Activated T-helper 1 cell treated with anti-CD3 and anti-CD28 coated beads, Interleukin-12 subunit alpha, Interleukin-12 subunit beta, Interleukin-2, Interleukin-4 antibody, amounts not matched to agents 30 ng/mL and 10 ng/mL and 1 ng/mL, durations not matched to agents 14 hours and 24 hours and 36 hours (primary cell): ENCODE measurements at regions of chr13 and their contacts with region 1.

Region 1: GRCh38 chr13:102394158-102395053 is 7.4 kb downstream of the FGF14 start:
- DNase-seq: peak; percentile 93
- H3K4me3 Mint-ChIP-seq: peak overlapping the region; percentile 87
- H3K27ac Mint-ChIP-seq: peak overlapping the region; percentile 92
- H3K4me1 Mint-ChIP-seq: peaks cover 30% of the 10 kb centered on the region
- H3K27me3 Mint-ChIP-seq: peaks cover 25% of the 10 kb centered on the region

Region 2: GRCh38 chr13:100674848-100675660 is 1719.4 kb before region 1 on chr13:
- intact Hi-C with region 1: loop called (anchors 10 kb)
- DNase-seq: peak; percentile 100
- H3K4me3 Mint-ChIP-seq: peak overlapping the region; percentile 87
- H3K27ac Mint-ChIP-seq: peak overlapping the region; percentile 86
- H3K4me1 Mint-ChIP-seq: peaks cover 31% of the 10 kb centered on the region
- H3K27me3 Mint-ChIP-seq: peaks cover 10% of the 10 kb centered on the region

Region 3: DNA sequence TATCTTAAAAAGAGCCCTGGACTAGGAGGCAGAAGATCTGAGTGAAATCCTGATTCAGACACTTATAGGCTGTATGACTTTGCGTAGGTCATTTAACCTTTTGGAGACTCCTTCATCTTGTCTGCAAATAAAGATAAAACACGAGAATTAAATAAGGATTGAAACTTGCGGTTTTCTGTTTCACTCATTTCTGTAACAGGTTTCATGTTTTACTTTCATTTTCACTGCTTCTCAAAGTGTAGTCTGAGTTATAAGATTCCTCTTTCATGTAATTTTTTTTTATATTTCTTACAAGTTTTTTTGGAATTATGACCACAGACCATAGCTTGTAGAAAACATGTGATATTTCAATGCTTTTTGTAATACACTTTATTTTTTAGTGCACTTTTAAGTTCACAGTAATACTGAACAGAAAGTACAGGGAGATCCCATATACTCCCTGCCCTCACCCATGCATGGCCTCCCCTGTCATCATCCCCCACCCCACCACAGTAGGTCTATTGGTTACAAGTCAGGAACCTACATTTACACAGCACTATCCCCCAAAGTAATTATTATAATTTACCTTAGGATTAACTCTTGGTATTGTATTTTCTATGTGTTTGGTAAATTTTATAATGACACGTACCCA is 767.4 kb before region 1 on chr13:
- intact Hi-C with region 1: loop called (anchors 2 kb)
- DNase-seq: no peak
- H3K4me3 Mint-ChIP-seq: no peak overlapping the region
- H3K27ac Mint-ChIP-seq: peak overlapping the region; percentile 69
- H3K4me1 Mint-ChIP-seq: peaks cover 40% of the 10 kb centered on the region
- H3K27me3 Mint-ChIP-seq: peaks cover 19% of the 10 kb centered on the region

Region 4: GRCh38 chr13:102510072-102510471 is 115.7 kb after region 1 on chr13:
- intact Hi-C with region 1: no loop called
- DNase-seq: no peak
- H3K4me3 Mint-ChIP-seq: no peak overlapping the region
- H3K27ac Mint-ChIP-seq: no peak overlapping the region
- H3K4me1 Mint-ChIP-seq: no peaks in the 10 kb centered on the region
- H3K27me3 Mint-ChIP-seq: no peaks in the 10 kb centered on the region

Region 5: DNA sequence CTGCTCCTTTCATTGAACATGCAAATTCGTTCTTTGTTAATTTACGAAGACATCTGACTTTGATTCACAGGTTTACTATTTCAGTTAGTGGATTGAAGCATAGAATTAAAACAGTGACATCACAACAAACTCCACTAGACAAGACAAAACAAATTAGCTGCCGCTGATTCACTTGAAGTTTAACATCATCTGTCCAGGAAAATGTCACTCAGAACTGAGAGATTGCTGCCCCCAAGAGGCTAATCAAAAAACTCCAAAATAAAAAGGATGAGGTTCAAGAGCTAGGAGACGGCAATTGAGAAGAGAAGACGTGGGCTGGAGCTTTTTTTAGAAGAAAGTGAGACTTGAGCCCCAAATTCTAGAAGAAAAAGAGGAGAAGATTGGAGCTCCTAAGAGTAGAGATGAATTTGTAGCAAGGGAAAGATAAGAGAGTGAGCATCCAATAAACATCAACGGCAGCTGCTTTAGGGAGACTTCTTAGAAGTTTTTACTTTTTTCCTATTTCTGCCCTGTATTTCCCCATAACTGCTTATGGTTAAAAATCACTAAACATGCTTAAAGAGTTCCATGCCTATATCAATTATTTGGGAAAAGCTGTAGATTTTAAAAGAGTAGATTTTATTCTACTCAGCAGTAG is 161.6 kb after region 1 on chr13:
- intact Hi-C with region 1: loop called (anchors 5 kb)
- DNase-seq: no peak
- H3K4me3 Mint-ChIP-seq: no peak overlapping the region
- H3K27ac Mint-ChIP-seq: no peak overlapping the region
- H3K4me1 Mint-ChIP-seq: no peaks in the 10 kb centered on the region
- H3K27me3 Mint-ChIP-seq: peaks cover 9% of the 10 kb centered on the region

Region 6: DNA sequence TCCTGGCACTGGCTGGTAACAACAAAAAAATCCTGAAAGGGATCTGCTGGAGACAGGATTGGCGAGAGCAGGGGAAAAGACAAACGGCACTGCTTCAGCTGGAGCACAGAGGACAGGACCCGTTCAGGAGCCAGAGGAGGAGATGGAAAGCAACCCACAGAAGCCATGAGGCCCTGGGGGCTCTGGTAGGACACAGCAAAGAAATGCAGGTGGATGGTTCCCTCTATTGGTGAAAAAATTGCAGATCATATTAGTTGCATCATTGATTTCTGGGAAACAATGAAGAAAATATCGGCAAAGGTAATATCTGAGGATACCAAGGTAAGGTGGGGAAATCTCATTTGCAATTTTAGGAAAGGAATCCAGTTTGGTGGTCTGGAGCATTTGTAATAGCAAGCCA is 176.7 kb after region 1 on chr13:
- intact Hi-C with region 1: no loop called
- DNase-seq: no peak
- H3K4me3 Mint-ChIP-seq: no peak overlapping the region
- H3K27ac Mint-ChIP-seq: no peak overlapping the region
- H3K4me1 Mint-ChIP-seq: no peaks in the 10 kb centered on the region
- H3K27me3 Mint-ChIP-seq: peaks cover 25% of the 10 kb centered on the region

Region 7: DNA sequence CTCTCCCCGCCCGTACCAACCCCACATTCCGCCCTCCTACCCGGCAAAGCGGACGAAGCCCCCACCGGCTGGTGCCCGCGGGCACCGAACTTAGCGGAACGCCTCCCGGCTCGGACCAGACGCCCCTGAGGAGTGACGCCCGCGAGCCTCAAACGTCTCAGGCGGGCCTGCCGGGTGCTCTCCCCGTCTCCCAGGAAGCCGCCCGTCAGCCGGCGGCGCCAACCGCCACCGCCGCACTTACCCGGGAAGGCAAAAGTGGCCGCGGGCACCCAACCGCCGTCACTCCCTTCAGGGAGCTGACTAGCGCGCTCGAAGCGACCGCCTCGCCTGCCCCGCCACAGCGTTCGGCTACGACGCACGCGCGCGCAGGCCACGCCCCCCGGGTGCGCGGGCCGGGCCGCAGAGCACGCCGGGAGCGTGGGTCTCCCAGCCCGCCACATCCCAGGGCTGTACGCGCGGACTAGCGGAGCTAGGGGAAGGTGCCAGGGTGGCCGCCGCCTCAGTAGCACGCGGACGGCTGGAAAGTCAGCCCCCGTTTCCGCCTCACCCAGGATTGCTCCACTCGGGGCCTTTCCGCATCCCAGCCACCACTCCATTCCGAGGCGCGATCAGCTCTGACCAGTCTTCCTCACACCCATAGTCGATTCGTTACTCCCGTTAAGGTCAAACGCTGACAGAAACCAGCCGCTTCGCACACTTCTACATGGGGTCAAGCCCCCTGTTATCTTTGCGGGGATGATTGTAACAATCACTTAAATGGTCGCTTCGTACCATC is 379.2 kb after region 1 on chr13 and contains the start of gene TEX30:
- intact Hi-C with region 1: loop called (anchors 2 kb)
- DNase-seq: peak; percentile 89
- H3K4me3 Mint-ChIP-seq: peak within 1 kb of the TSS; percentile 95
- H3K27ac Mint-ChIP-seq: peak within 1 kb of the TSS; percentile 95
- H3K4me1 Mint-ChIP-seq: peaks cover 66% of the 10 kb centered on the region
- H3K27me3 Mint-ChIP-seq: no peaks in the 10 kb centered on the region
- total RNA-seq, gene TEX30: 60.2 and 66.0 TPM in 2 replicates

Region 8: GRCh38 chr13:102845630-102846260 is 451.3 kb after region 1 on chr13 and contains the start of gene ERCC5:
- intact Hi-C with region 1: loop called (anchors 1 kb)
- DNase-seq: peak; percentile 94
- H3K4me3 Mint-ChIP-seq: peak within 1 kb of the TSS; percentile 95
- H3K27ac Mint-ChIP-seq: peak within 1 kb of the TSS; percentile 99
- H3K4me1 Mint-ChIP-seq: peaks cover 51% of the 10 kb centered on the region
- H3K27me3 Mint-ChIP-seq: no peaks in the 10 kb centered on the region
- total RNA-seq, gene ERCC5: 40.3 and 42.4 TPM in 2 replicates